SK-N-SH (cell line): ENCODE measurements at regions of chr4 and their contacts with region 1.

Region 1: DNA sequence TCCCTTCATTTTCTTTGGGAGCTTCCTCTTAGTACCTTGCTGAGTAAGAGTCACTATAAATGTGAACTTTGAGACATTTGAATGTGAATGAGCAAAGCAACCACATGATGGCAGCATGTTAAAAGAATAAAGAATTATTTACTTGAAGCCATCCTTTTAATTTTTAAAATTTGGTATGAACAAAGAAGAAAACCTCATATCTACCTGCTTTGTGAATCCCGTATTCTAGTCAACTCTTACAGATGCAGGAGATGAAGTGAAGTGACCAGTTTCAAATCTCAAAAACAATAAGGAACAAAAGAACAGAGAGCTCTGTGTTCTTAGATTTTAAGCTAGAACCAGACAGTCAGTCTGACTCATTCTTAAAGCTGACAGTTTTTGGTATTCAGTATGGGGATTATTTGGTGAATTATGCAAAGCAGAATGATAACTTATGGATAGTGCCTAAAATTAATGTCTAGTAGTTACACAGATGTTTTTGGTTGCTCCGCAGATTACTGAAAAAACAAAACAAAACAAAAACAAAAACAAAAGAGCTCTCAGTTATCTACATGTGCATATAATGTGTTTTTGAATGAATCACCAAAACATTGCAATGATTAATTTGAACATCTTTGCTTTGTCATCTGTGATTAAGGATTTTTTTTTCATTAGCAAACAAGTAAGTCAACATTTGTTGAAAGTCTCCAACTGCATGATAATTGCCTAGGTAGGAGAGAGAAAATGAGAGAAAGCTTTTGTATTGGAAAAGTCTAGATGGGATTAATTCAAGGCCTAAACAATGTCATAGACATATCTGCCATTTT is 48.2 kb upstream of the H2AZ1 start:
- DNase-seq: peak; percentile 27
- H3K4me3 ChIP-seq: no peak overlapping the region
- H3K27ac ChIP-seq: peak overlapping the region; percentile 60 to 69
- H3K4me1 ChIP-seq: peaks cover 4 to 9% of the 10 kb centered on the region in 2 experiments; a peak in 2 of 4 replicates
- H3K27me3 ChIP-seq: no peaks in the 10 kb centered on the region
- CTCF ChIP-seq: peak; percentile 70
- EP300 ChIP-seq: no peak
- RAD21 ChIP-seq: peak; percentile 77

Region 2: GRCh38 chr4:99894161-99894997 is 103.9 kb before region 1 on chr4 and contains the start of gene LAMTOR3:
- CTCF ChIA-PET with region 1: no interaction called
- POLR2A ChIA-PET with region 1: no interaction called
- DNase-seq: peak; percentile 96
- H3K4me3 ChIP-seq: peak within 1 kb of the TSS; percentile 95 to 98
- H3K27ac ChIP-seq: peak within 1 kb of the TSS; percentile 66 to 87
- H3K4me1 ChIP-seq: no peaks in the 10 kb centered on the region; a peak in 2 of 4 replicates
- H3K27me3 ChIP-seq: no peaks in the 10 kb centered on the region
- CTCF ChIP-seq: no peak
- EP300 ChIP-seq: no peak
- RAD21 ChIP-seq: no peak
- polyA plus RNA-seq, gene LAMTOR3: 20.8 and 29.7 TPM in 2 replicates

Region 3: GRCh38 chr4:100022792-100023222 is 24.5 kb after region 1 on chr4:
- CTCF ChIA-PET with region 1: interaction called, 16 read pairs
- POLR2A ChIA-PET with region 1: no interaction called
- DNase-seq: peak; percentile 59
- H3K4me3 ChIP-seq: no peak overlapping the region
- H3K27ac ChIP-seq: peak overlapping the region in 1 of 2 experiments; percentile 99; a peak in 3 of 4 replicates
- H3K4me1 ChIP-seq: peaks cover 0 to 19% of the 10 kb centered on the region in 2 experiments; a peak in 2 of 4 replicates
- H3K27me3 ChIP-seq: no peaks in the 10 kb centered on the region
- CTCF ChIP-seq: no peak
- EP300 ChIP-seq: peak in 1 of 2 experiments; percentile 78; a peak in 2 of 4 replicates
- RAD21 ChIP-seq: no peak

Region 4: DNA sequence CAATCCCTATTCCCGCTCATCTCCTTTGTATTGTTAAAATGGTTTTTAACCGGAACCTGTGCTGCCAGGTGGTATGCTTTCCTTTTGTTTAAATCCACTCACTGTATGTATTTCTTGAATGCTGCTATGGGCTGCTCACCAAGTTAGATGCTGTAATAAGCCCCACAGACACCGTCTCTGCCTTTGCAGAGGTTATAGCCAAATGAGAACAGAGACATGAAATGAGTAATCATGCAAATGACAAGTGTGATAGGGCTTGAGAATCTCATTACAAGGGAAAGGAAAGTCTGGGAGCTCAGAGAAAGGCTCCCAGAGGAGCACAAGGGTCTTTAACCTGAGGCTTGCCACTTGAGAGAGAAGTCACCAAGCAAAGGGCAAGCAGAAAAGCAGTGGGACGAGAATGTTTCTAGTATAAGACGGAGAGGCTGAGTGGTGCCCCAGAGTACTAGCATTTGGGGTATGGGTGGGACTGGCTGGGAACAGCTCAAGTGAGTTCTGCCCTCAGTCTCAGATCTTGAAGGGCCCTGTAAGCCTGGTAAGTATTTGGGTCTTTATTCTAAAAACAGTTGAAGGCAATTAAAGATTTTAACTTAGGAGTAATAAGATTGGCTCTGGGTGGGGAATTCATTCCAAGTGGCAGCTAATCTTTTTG is 62.6 kb after region 1 on chr4:
- CTCF ChIA-PET with region 1: interaction called, 44 read pairs
- POLR2A ChIA-PET with region 1: no interaction called
- DNase-seq: no peak
- H3K4me3 ChIP-seq: no peak overlapping the region
- H3K27ac ChIP-seq: no peak overlapping the region
- H3K4me1 ChIP-seq: peaks cover 0 to 9% of the 10 kb centered on the region in 2 experiments; a peak in 3 of 4 replicates
- H3K27me3 ChIP-seq: no peaks in the 10 kb centered on the region
- CTCF ChIP-seq: no peak
- EP300 ChIP-seq: no peak
- RAD21 ChIP-seq: no peak

Region 5: DNA sequence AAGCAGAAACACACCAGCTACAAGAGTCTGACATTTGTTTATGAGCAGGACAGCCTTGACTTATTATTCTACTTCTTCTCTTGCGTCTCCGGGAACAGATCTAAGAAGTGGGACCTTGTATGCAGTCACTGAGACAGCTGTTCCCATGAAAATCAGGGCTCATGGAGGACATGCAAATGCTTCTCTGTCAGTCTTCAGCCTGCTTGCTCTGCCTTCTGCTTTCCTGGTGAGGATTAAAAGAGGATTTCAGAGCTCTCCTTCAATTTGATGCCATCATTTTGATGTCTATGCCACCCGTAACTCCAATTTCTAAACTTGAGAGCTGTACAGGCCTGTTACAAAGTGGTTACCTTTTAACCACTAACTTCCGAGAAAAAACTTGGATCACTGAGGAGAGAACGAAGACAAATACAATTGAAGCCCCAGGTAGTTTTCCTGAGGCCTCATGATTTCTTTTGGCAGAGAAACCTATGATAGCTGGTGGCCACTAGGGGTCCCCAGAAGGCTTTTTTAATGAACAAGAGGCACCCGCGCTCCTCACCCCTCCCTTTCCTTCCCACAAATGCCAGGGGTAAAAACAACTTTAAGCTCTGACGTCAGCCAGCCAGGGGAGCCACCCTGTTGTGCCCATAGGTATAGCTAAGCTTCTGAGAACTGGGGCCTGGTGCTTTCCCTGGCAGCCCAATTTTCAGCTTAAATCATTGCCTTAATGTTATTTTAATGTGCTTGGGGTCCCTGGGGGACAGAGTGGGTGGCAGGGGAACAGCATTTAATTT is 95.0 kb after region 1 on chr4:
- CTCF ChIA-PET with region 1: interaction called, 109 read pairs
- POLR2A ChIA-PET with region 1: no interaction called
- DNase-seq: peak; percentile 66
- H3K4me3 ChIP-seq: peak overlapping the region in 1 of 2 experiments; percentile 5; a peak in 1 of 4 replicates
- H3K27ac ChIP-seq: peak overlapping the region in 1 of 2 experiments; percentile 45; a peak in 1 of 4 replicates
- H3K4me1 ChIP-seq: peaks cover 3 to 8% of the 10 kb centered on the region in 2 experiments
- H3K27me3 ChIP-seq: no peaks in the 10 kb centered on the region
- CTCF ChIP-seq: peak; percentile 89
- EP300 ChIP-seq: no peak
- RAD21 ChIP-seq: peak; percentile 84